Activated CD8-positive, alpha-beta memory T cell treated with anti-CD3 and anti-CD28 coated beads, Interleukin-2, amount 10 ng/mL, durations not matched to agents 7 days and 5 days (primary cell): ENCODE measurements at regions of chr22 and their contacts with region 1.

Region 1: DNA sequence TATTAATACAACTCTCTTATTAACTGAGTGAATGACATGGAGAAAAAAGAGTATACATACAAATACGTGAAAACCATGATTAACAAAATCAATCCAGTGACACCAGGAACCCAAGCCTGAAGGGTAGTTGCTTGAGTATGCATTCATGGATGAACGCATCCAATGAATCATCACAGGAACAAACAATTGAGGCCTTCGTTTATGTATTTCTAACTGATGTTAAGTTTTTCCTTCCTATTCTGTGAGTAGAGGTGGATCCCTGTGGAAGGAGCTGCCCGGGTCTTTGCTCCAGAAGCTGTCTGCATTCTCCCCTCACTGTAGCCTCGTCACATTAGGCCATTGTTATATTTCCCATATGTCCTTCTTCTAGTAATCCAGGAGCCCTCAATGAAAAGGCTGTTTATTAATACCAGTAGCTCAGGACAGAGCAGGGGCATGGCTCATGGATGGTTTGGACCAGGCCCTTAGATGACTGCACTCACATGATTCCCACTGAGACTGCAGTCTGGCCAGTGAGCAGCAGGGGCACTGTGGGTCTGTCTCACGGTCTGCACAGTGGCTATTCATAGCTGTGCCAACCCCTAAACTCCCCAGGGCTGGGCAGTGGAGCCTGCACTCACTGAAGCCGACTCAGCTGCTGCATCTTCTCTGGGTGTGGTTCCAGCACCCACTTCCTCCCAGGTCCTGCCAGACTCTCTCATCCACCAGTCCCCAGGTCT is 128.1 kb upstream of the TOP3B start:
- DNase-seq: peak; percentile 91
- ATAC-seq: peak; percentile 95
- H3K4me3 Mint-ChIP-seq: peak overlapping the region; percentile 28
- H3K27ac Mint-ChIP-seq: peak overlapping the region; percentile 80
- H3K4me1 Mint-ChIP-seq: peaks cover 27% of the 10 kb centered on the region
- H3K27me3 Mint-ChIP-seq: peaks cover 14% of the 10 kb centered on the region

Region 2: DNA sequence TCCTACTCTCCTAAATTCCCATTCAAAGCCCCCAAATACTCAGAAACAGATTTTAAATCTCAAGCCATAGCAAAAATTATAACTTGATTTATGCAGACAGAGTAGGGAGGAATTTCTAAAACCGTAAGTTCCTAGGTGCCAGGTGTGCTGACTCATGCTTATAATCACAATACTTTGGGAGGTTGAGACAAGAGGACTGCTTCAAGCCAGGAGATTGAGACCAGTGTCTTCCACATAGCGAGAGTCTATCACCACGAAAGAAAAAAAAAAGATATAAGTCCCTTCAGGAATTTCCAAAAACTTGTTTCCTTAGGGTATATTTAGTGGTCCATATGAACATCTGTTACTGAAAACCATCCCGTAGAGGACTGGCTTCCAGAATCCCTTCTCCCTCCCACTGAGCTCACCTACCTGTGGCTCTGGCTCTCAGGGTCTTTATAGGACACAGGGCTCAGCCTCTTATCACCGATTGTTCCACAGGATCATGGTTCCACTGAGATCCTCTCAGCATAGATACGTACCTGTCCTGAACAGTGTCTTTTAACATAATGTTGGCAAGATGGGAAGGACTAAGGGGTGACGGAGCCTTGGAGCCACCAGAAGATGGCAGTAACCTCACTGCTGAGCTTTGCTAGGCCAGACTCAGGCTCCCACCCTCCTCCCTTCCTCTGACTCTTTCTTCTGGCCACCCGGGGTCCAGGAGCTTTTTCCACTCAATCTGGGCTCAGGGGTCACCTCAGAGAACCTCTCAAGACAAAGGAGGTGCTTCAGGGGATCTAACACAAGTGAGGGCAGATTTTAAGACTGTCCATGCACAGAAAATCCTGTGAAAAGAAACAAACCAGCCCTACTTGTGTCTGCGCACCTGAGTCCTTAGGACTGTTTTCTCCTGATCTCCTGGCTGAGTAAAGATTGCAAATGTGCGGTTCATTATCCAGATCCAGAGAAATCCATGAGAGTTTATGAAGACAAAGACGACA is 10.6 kb before region 1 on chr22:
- CTCF ChIA-PET with region 1: interaction called, 35 read pairs
- DNase-seq: no peak
- ATAC-seq: peak; percentile 47
- H3K4me3 Mint-ChIP-seq: no peak overlapping the region
- H3K27ac Mint-ChIP-seq: no peak overlapping the region
- H3K4me1 Mint-ChIP-seq: no peaks in the 10 kb centered on the region
- H3K27me3 Mint-ChIP-seq: peaks cover 50% of the 10 kb centered on the region

Region 3: DNA sequence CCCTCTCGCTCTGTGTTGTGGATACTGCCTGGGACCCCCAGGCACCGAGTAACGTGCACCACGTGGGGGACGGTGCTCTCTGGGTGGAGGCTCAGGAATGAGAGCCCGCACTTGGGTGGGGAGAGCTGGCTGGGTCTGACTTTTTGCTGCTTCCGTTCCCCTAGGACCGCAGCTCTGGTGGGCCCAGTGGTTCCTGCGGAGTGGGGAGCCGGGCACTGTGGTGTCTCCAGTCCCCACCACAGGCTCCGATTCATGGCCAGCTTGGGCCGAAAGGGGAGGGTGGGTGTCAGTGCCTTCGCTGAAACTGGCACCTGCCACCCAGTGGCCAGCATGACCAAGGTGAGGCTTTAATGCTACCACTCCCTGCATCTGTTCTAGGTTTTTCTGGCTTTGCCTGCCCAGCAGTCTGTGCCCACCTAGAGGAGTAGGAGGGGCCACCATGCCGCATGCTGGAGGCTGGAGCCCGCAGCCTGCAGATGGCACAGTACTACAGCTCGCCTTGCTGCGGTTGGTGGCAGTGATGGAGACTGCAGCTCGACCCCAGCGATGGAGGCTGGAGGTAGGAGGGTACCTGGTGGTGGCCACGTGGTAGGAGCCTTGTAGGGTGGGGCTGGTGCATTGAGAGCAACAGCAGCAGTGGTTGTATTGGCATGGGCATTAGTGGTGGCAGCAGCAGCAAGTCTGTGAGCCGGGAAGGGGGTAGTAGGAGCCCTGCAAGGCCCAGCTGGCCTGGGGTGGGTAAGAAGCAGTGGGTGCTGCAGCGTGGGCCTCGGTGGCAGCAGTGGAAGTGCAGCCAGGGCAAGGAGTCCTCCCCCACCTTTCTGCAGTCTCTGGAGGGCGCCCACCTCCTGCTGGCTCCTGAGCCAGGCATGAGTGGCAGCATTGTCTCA is 15.1 kb after region 1 on chr22:
- CTCF ChIA-PET with region 1: interaction called, 12 read pairs
- DNase-seq: no peak
- ATAC-seq: no peak
- H3K4me3 Mint-ChIP-seq: no peak overlapping the region
- H3K27ac Mint-ChIP-seq: no peak overlapping the region
- H3K4me1 Mint-ChIP-seq: peaks cover 10% of the 10 kb centered on the region
- H3K27me3 Mint-ChIP-seq: peaks cover 40% of the 10 kb centered on the region

Region 4: DNA sequence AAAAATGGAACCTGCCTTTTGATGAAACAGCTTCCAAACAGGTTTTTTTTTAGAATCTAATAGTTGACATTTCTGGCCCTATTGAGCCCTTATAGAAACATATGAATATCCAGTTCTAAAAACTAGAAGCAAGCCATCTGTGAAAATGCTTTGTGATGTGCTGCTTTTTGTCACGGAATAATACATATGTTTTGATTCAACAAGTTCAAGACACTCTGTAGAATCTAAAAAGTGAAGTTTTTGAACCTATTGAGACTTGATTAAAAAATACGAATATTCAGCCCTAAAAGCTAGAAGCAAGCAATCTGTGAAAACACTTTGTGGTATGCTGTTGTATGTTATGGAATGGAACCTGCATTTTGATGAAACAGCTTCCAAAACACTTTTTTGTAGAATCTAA is 27.2 kb after region 1 on chr22:
- CTCF ChIA-PET with region 1: interaction called, 10 read pairs
- DNase-seq: no peak
- ATAC-seq: no peak
- H3K4me3 Mint-ChIP-seq: no peak overlapping the region
- H3K27ac Mint-ChIP-seq: no peak overlapping the region
- H3K4me1 Mint-ChIP-seq: no peaks in the 10 kb centered on the region
- H3K27me3 Mint-ChIP-seq: peaks cover 59% of the 10 kb centered on the region

Region 5: GRCh38 chr22:22156716-22157347 is 46.1 kb after region 1 on chr22:
- CTCF ChIA-PET with region 1: interaction called, 12 read pairs
- DNase-seq: peak; percentile 82
- ATAC-seq: peak; percentile 87
- H3K4me3 Mint-ChIP-seq: no peak overlapping the region
- H3K27ac Mint-ChIP-seq: peak overlapping the region; percentile 17
- H3K4me1 Mint-ChIP-seq: peaks cover 5% of the 10 kb centered on the region
- H3K27me3 Mint-ChIP-seq: peaks cover 19% of the 10 kb centered on the region